Gastrocnemius medialis (tissue), 4 donors: ENCODE measurements at regions of chr9 and their contacts with region 1.

Region 1: GRCh38 chr9:14961372-14962068 is 51.3 kb upstream of the FREM1 start:
- DNase-seq: no peak
- ATAC-seq: no peak
- H3K4me3 ChIP-seq: no peak overlapping the region
- H3K27ac ChIP-seq: no peak overlapping the region
- H3K4me1 ChIP-seq: no peaks in the 10 kb centered on the region
- H3K27me3 ChIP-seq: no peaks in the 10 kb centered on the region
- CTCF ChIP-seq: no peak
- POLR2A ChIP-seq: no peak

Region 2: DNA sequence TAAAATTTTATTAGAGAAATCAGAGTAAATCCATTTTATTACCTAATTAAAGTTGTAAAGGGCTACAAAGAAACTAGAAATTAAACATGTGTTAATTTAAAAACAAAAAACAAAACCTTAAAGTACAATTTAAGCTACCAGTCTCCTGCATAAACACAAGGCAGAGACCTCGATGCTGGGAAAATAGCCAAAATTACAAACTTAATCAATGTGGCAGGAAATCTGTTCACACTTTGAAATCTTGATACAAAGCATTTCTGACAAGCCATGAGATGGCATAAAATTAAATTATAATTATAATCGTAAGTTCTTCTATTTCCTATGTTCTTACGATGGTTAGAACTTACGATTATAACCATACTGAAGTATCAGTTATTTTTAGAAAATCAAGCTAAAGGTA is 106.7 kb after region 1 on chr9:
- in situ Hi-C with region 1: loop called in 1 of 4 experiments (anchors 25 kb)
- intact Hi-C with region 1: no loop called
- DNase-seq: no peak
- ATAC-seq: no peak
- H3K4me3 ChIP-seq: no peak overlapping the region
- H3K27ac ChIP-seq: no peak overlapping the region
- H3K4me1 ChIP-seq: no peaks in the 10 kb centered on the region
- H3K27me3 ChIP-seq: no peaks in the 10 kb centered on the region
- CTCF ChIP-seq: no peak
- POLR2A ChIP-seq: no peak

Region 3: DNA sequence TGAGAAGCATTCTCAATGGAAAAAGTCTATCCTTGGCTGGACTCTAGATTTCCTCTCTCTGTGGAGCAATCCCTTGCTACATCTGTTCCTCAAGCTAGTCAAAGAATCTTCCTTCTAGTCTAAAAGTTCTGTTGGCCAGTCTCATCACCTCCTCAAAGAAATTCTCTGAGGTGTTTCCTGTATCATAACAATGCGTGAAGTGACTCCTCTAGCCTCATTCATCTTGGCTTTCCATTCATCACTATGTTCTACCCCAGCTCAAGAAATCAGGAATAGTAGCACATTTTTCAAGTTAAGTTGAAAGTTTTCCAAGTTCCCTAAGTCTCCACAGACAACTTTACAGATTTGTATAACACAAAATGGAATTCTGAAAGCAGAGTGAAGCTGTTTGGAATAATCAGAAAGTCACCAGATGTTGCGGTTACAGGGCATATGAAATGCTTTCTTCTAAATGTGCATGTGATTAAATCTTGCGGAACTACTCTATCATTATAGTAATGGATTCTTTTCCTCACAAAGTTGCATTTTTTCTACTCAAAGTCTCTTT is 125.3 kb after region 1 on chr9:
- in situ Hi-C with region 1: no loop called
- intact Hi-C with region 1: no loop called
- DNase-seq: no peak
- ATAC-seq: no peak
- H3K4me3 ChIP-seq: no peak overlapping the region
- H3K27ac ChIP-seq: no peak overlapping the region
- H3K4me1 ChIP-seq: no peaks in the 10 kb centered on the region
- H3K27me3 ChIP-seq: no peaks in the 10 kb centered on the region
- CTCF ChIP-seq: no peak
- POLR2A ChIP-seq: no peak